ENCODE measurements at regions of chr1 and their contacts with region 1.

Region 1: GRCh38 chr1:904310-904950 is 19.3 kb upstream of the SAMD11 start:
- DNase-seq: peak in 1 of 2 experiments; percentile 77
- ATAC-seq: peak; percentile 76 to 82
- H3K4me3 ChIP-seq: peak overlapping the region; percentile 52
- H3K27ac ChIP-seq: peak overlapping the region; percentile 93
- H3K4me1 ChIP-seq: peaks cover 37% of the 10 kb centered on the region
- CTCF ChIP-seq: peak; percentile 72
- EP300 ChIP-seq: no peak
- POLR2A ChIP-seq: peak; percentile 32
- RAD21 ChIP-seq: peak; percentile 64 to 86

Region 2: DNA sequence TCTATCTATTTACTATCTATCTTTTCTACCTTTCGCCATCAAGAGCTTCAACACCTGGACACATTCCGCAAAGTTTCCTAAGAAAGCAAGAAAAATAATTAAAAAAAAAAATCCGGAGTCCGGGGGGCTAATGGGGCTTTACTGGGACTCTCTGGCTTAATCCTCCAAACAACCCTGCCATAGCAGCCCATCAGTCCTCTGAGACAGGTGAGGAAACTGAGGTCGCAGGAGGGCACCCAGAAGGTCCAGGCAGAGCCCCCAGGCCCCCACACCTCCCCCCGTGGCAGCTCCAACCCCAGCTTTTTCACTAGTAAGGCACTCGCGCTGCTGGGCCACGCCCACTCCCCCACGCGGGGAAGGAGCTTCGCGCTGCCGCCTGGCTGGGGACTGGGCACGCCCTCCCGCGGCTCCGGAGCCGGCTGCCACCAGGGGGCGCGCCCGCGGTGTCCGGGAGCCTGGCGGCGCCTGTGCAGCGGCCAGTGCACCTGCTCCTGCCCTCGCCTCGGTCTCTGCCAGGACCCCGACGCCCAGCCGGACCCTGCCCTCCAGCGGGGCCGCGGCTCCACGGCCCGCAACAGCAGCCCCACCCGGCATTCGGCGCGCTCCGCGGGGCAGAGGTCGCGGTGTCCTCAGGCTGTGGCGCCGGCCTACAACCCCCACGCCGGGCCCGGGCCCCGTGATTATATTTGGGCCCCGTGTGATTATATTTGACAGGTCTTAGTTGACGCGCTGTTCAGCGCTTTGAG is 34.8 kb before region 1 on chr1:
- CTCF ChIA-PET with region 1: interaction called, 15 read pairs
- POLR2A ChIA-PET with region 1: no interaction called
- DNase-seq: peak; percentile 39 to 42
- ATAC-seq: peak; percentile 93 to 98
- H3K4me3 ChIP-seq: no peak overlapping the region
- H3K27ac ChIP-seq: peak overlapping the region in 1 of 2 experiments; percentile 62; a peak in 2 of 6 replicates
- H3K4me1 ChIP-seq: no peaks in the 10 kb centered on the region
- CTCF ChIP-seq: peak; percentile 76
- EP300 ChIP-seq: no peak
- POLR2A ChIP-seq: no peak
- RAD21 ChIP-seq: peak in 1 of 2 experiments; percentile 58; a peak in 3 of 5 replicates

Region 3: DNA sequence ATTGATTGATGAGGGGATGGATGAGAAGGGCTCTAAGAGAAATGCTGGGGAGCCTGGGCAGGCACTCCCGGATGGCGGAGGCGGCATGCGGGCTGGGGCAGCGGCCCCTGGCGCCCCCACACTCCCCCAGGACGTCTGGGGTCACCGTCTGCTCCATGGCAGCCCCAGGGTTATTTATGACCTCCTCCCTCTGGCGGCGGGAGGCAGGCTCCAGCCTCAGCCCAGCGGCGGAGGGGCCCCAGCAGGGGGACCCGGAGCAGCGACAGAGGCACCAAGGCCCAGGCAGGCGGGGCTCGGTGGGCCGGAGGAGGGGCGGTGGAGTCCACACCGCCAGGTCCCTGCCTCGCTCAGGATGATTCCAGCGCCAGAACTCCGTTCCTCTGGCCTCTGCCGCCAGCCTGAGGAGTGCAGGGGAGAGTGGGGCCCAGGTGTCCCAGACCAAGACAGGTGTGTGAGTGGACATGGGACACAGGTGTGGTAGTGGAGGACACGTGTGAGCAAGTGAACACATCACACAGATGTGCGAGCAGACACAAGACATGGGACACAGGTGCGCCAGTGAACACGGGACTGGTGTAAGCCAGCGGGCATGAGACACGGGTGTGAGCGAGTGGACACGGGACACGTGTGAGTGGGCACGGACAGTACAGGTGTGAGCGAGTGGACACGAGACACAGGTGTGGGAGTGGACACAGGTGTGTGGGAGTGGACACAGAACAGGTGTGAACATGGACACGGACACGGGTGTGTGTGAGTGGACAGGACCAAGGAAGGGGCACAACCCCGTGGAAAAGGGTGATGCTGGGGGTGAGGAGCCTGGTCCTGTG is 16.8 kb after region 1 on chr1:
- CTCF ChIA-PET with region 1: interaction called, 33 read pairs
- POLR2A ChIA-PET with region 1: no interaction called
- DNase-seq: peak; percentile 63 to 71
- ATAC-seq: peak; percentile 46 to 69
- H3K4me3 ChIP-seq: peak overlapping the region; percentile 29; the same call in 2 of the 3 replicates
- H3K27ac ChIP-seq: peak overlapping the region; percentile 70 to 97; a peak in 5 of 6 replicates
- H3K4me1 ChIP-seq: peaks cover 51% of the 10 kb centered on the region
- CTCF ChIP-seq: peak; percentile 9; the same call in 1 of the 3 replicates
- EP300 ChIP-seq: no peak; a peak in 1 of 5 replicates
- POLR2A ChIP-seq: no peak; the same call in 1 of the 2 replicates
- RAD21 ChIP-seq: 0 out of 5 replicates have a peak, but pooled peaks of 1 of the 2 experiments have one; percentile 20

Region 4: GRCh38 chr1:975896-976683 is 71.7 kb after region 1 on chr1:
- CTCF ChIA-PET with region 1: interaction called, 11 read pairs
- POLR2A ChIA-PET with region 1: no interaction called
- DNase-seq: peak; percentile 80 to 84
- ATAC-seq: peak; percentile 82 to 94
- H3K4me3 ChIP-seq: peak overlapping the region; percentile 38
- H3K27ac ChIP-seq: peak overlapping the region; percentile 69 to 90
- H3K4me1 ChIP-seq: peaks cover 7% of the 10 kb centered on the region; the same call in 1 of the 3 replicates
- CTCF ChIP-seq: peak; percentile 35; the same call in 2 of the 3 replicates
- EP300 ChIP-seq: no peak
- POLR2A ChIP-seq: no peak
- RAD21 ChIP-seq: peak; percentile 52 to 54

Region 5: DNA sequence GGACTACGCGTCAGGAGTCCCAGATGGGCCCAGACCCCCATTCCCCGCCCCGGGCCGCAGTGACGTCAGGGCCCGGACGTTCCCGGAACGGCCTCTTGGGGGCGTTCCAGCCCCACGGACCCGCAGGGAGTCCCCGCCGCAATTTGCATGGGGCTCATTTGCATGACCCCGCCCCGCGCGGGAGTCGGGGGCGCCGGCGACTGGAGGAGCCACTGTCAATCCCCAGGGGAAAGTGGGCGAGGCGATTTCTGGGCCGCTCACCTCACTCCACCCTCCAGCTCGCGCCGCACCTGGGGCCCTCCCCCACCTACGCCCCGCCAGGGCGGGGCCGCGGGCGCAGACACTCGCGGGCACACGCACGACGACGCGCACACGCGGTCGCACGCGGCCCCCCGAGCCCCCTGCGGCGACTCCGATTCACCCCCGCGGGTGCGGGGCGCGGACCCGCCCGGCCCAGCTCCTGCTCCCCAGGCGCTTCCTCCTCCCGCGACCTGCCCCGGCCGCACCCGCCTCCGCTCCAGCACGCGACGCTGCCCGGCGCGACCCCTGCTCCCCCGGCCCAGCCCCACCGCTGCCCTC is 128.7 kb after region 1 on chr1:
- CTCF ChIA-PET with region 1: no interaction called
- POLR2A ChIA-PET with region 1: no interaction called
- DNase-seq: peak in 1 of 2 experiments; percentile 43
- ATAC-seq: peak in 1 of 2 experiments; percentile 65; a peak in 3 of 6 replicates
- H3K4me3 ChIP-seq: no peak overlapping the region
- H3K27ac ChIP-seq: no peak overlapping the region
- H3K4me1 ChIP-seq: no peaks in the 10 kb centered on the region; the same call in 2 of the 3 replicates
- CTCF ChIP-seq: peak; percentile 15; the same call in 1 of the 3 replicates
- EP300 ChIP-seq: no peak
- POLR2A ChIP-seq: no peak
- RAD21 ChIP-seq: peak in 1 of 2 experiments; percentile 22; a peak in 2 of 5 replicates

Region 6: GRCh38 chr1:1630271-1630964 is 726.0 kb after region 1 on chr1:
- CTCF ChIA-PET with region 1: no interaction called
- POLR2A ChIA-PET with region 1: no interaction called
- DNase-seq: no peak
- ATAC-seq: no peak
- H3K4me3 ChIP-seq: no peak overlapping the region
- H3K27ac ChIP-seq: no peak overlapping the region
- H3K4me1 ChIP-seq: no peaks in the 10 kb centered on the region
- CTCF ChIP-seq: no peak
- EP300 ChIP-seq: no peak
- POLR2A ChIP-seq: no peak
- RAD21 ChIP-seq: no peak